ENCODE measurements at regions of chr10 and their contacts with region 1.

Region 1: DNA sequence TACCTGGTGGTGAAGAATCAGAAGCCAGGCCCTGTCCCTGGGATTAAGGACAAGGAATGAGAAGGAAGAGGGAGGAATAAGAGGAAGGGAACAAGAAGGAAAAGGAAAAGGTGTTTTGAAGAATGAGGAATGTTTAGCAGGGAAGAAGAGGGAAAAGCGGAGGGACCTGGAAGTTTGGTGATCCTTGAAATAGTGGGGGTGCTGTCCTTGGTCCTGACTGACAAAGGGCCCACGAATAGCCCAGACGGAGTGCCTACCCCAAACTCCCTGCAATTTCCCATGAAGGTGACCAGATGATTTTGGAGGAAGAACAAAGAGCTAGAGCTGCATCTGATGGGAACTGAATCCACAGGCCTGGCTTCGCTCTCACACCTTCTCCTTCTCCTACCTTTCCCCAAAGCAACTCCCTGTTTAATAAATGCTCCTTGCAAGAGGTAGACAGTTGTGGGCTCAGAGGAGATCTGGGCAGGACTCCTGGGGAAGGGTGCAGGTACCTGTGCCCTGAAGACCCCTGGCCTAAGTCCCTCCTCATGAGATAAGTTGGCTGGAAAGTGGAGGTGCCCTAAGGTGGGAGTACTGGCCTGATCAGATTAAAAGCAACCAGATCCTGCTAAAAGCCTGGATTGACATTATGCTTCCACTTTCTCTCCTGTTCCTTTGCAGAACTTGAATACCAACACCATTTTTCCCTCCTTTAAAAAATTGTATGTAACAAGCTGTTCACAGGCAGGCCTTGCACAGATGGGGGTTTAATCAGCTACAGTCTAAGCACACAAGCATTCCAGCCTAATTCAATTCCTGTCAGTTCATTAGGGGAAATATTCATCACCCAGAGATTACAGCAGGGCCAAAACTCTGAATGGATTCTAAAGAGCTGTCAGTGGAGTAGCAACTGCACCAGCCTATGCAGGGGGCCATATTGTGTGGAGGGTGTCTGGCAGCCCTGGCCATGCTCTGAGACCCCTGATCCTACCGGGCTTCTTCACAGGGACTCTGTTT is 19.4 kb downstream of the KAZALD1 start:
- DNase-seq: no peak
- H3K4me3 ChIP-seq: no peak overlapping the region
- H3K27me3 ChIP-seq: peaks cover 19% of the 10 kb centered on the region
- CTCF ChIP-seq: no peak

Region 2: DNA sequence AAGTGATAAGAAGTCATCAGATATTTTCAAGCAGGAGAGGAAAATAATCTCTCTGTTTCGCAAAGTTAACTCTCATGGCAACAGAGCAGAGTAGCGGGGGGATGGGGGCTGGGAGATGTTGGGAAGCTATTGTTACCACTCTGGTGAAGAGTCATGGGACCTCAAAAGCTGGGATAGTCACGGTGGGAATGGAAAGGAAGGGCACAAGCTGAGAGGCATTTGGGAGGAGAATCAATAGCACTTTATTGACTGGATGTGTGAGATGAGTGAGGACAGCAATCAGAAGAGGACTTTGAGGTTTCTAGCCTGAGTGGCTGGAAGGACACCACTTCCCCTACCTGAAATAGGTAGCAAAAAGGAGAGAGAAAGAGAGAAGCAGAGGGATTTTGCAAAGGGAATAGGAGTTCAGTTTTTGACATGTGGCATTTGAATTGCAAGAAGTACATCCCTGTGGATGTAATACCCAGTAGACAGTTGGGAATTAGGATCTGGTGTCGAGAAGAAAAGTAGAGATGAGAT is 707.0 kb before region 1 on chr10:
- CTCF ChIA-PET with region 1: no interaction called
- POLR2A ChIA-PET with region 1: no interaction called
- DNase-seq: no peak
- H3K4me3 ChIP-seq: peak overlapping the region; percentile 51
- H3K27me3 ChIP-seq: no peaks in the 10 kb centered on the region
- CTCF ChIP-seq: no peak

Region 3: GRCh38 chr10:101042667-101043355 is 38.4 kb before region 1 on chr10:
- CTCF ChIA-PET with region 1: no interaction called
- POLR2A ChIA-PET with region 1: no interaction called
- DNase-seq: peak; percentile 92
- H3K4me3 ChIP-seq: peak overlapping the region; percentile 47
- H3K27me3 ChIP-seq: peaks cover 3% of the 10 kb centered on the region; the same call in 1 of the 2 replicates
- CTCF ChIP-seq: no peak

Region 4: DNA sequence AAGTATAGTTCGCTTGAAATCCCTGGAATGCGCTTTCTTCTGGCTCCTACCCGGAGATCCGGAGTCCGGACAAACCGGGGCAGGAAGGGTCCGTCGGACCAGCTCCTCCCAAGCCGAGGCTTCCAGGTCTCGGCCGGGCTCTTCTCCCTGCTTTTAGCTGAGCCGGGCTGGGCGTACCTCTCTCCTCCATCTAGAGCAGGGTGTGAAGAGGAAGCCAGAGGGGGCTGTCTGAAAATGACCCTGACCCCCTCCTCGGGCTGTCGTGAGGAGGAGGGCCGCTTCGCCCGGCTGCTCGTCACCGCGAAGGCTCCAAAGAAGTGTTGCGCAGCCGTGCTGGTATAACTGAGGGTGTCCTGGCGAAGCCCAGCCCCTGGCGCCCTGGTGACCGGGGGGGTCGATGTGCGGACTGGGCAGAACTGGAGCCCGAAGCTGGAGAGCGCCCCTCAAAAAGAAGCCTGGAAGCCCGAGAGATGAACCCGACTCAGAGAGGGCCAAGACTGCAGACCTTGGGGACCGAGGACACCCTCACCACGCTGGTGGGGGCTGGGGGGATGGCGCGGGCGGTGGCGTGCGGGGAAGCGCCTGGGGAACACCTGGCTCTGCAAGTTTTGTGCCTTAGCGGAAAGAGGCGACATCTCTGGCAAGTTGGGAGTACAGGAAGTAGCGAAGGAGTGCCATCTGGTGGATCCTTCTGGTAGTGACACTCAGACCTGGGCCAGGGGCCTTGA is 13.7 kb before region 1 on chr10:
- CTCF ChIA-PET with region 1: interaction called, 12 read pairs
- POLR2A ChIA-PET with region 1: no interaction called
- DNase-seq: no peak
- H3K4me3 ChIP-seq: peak overlapping the region; percentile 50
- H3K27me3 ChIP-seq: peaks cover 2% of the 10 kb centered on the region
- CTCF ChIP-seq: peak; percentile 86

Region 5: DNA sequence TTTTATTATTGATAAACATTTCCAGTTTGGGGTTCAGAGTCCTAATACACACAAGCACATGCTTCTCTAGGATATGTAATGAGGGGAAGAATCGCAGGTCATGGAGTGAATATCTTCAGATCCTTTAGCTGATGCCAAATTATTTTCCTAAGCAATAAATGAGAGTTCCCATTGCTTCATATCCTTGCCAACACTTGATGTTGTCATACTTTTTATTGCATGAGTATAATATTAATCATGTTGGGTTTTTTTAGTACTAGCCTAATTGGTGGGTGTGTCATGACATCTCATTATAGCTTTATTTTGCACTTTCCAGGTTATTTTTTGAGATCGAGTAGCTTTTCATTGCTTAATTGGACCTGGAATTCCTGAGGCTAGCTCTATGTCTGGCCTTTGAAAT is 85.2 kb after region 1 on chr10:
- CTCF ChIA-PET with region 1: no interaction called
- POLR2A ChIA-PET with region 1: no interaction called
- DNase-seq: no peak
- H3K4me3 ChIP-seq: no peak overlapping the region
- H3K27me3 ChIP-seq: peaks cover 8% of the 10 kb centered on the region; the same call in 1 of the 2 replicates
- CTCF ChIP-seq: no peak

Measured in BJ (cell line).